Prostate gland (tissue), 2 donors: ENCODE measurements at regions of chrX and their contacts with region 1.

Region 1: DNA sequence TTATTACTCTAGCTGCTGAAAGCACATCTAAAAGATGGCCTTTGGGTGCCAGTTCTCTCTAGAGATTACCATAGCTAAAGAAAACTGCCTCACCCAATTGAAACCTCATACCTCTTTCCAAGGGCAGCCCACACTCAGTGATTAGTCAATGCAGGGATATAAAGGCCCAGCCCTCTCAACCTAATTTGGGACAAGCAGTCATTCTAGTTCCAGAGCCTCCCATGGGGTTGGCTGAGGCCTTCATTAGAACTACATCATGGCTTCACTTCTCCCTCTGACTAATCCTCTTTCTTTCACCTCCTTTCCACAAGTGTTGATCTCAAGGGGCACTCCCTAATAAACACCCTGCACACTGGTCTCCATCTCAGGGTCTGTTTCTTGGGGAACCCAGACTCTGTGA is 38.5 kb upstream of the C1GALT1C1 start:
- DNase-seq: no peak
- H3K4me3 ChIP-seq: no peak overlapping the region
- H3K27ac ChIP-seq: no peak overlapping the region
- H3K4me1 ChIP-seq: no peaks in the 10 kb centered on the region
- H3K27me3 ChIP-seq: no peaks in the 10 kb centered on the region
- CTCF ChIP-seq: no peak
- POLR2A ChIP-seq: no peak

Region 2: GRCh38 chrX:120629667-120630537 is 38.5 kb before region 1 on chrX and contains the start of gene C1GALT1C1:
- intact Hi-C with region 1: loop called (anchors 5 kb)
- DNase-seq: peak; percentile 82
- H3K4me3 ChIP-seq: peak within 1 kb of the TSS; percentile 42 to 48
- H3K27ac ChIP-seq: peak within 1 kb of the TSS; percentile 81 to 82
- H3K4me1 ChIP-seq: no peaks in the 10 kb centered on the region
- H3K27me3 ChIP-seq: no peaks in the 10 kb centered on the region
- CTCF ChIP-seq: no peak
- POLR2A ChIP-seq: peak; percentile 17
- total RNA-seq, gene C1GALT1C1: 24.4 to 33.7 TPM

Region 3: GRCh38 chrX:120749141-120749846 is 80.9 kb after region 1 on chrX:
- intact Hi-C with region 1: no loop called
- DNase-seq: no peak
- H3K4me3 ChIP-seq: no peak overlapping the region
- H3K27ac ChIP-seq: no peak overlapping the region
- H3K4me1 ChIP-seq: no peaks in the 10 kb centered on the region
- H3K27me3 ChIP-seq: no peaks in the 10 kb centered on the region
- CTCF ChIP-seq: no peak
- POLR2A ChIP-seq: no peak

Region 4: DNA sequence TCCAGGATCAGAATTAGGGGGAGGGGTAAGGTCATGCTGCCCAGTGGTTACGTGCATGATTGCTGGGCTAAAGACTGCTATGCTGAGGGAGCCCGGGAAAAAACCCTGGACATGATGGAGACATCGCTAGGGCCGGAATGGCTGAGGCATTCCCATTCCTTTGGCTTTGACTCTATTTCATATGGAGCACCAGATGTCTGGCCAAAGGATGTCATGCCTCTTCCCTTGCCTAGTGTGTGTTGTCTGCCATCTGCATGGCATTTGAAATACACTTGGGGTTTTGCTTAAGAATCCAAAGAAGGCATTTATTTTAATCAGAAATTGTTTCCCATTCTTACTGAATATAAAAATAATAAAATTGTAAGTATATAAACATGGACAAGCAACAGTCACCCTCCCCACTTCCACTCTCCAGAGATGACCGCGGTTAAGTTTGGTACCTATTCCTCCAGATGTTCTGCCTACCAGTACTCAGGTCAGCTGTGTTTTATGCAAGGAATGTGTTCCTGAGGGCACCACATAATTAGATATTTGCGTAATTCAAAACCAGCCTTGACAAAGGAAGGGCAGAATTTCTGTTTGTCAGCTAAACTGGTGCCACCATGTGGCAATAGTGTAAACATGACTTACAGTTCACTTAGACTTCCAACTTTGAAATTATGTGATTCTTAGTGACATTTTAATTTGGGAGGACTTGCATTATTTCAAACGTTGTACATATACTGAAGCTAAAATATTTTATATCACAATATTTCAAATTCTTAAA is 101.4 kb after region 1 on chrX:
- intact Hi-C with region 1: no loop called
- DNase-seq: peak; percentile 6
- H3K4me3 ChIP-seq: no peak overlapping the region
- H3K27ac ChIP-seq: no peak overlapping the region
- H3K4me1 ChIP-seq: no peaks in the 10 kb centered on the region
- H3K27me3 ChIP-seq: no peaks in the 10 kb centered on the region
- CTCF ChIP-seq: peak in 2 of 4 experiments; percentile 36 to 40
- POLR2A ChIP-seq: no peak

Region 5: DNA sequence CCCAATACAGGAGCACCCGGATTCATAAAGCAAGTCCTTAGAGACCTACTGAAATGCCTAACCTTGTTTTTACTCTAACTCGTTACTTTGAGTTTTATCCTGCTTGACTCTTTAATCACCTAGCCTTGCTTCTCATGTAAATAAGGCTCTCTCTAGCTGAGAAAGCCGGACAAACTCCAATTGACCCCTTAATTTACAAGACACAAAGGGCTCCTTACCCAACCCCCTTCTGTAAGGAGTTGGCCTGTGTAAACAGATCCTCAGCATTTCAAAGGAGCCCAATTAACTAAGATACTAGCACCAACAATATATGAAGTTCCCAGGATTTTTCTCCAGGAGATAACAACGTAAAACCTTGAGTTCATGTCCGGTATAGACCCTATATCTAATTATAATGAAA is 145.6 kb after region 1 on chrX:
- intact Hi-C with region 1: no loop called
- DNase-seq: no peak
- H3K4me3 ChIP-seq: no peak overlapping the region
- H3K27ac ChIP-seq: no peak overlapping the region
- H3K4me1 ChIP-seq: no peaks in the 10 kb centered on the region
- H3K27me3 ChIP-seq: no peaks in the 10 kb centered on the region
- CTCF ChIP-seq: no peak
- POLR2A ChIP-seq: no peak